Activated CD4-positive, alpha-beta T cell treated with anti-CD3 and anti-CD28 coated beads, Interleukin-2, amount 10 ng/mL, durations not matched to agents 7 days and 5 days (primary cell): ENCODE measurements at regions of chr17 and their contacts with region 1.

Region 1: GRCh38 chr17:81683584-81684237 is at the starts of genes ARL16 and HGS:
- DNase-seq: peak; percentile 98
- H3K4me3 Mint-ChIP-seq: peak within 1 kb of the TSS; percentile 86
- H3K27ac Mint-ChIP-seq: peak within 1 kb of the TSS; percentile 91
- H3K4me1 Mint-ChIP-seq: peaks cover 39% of the 10 kb centered on the region
- H3K27me3 Mint-ChIP-seq: no peaks in the 10 kb centered on the region
- total RNA-seq, gene ARL16: 35.4 to 42.1 TPM
- total RNA-seq, gene HGS: 121 to 128 TPM

Region 2: DNA sequence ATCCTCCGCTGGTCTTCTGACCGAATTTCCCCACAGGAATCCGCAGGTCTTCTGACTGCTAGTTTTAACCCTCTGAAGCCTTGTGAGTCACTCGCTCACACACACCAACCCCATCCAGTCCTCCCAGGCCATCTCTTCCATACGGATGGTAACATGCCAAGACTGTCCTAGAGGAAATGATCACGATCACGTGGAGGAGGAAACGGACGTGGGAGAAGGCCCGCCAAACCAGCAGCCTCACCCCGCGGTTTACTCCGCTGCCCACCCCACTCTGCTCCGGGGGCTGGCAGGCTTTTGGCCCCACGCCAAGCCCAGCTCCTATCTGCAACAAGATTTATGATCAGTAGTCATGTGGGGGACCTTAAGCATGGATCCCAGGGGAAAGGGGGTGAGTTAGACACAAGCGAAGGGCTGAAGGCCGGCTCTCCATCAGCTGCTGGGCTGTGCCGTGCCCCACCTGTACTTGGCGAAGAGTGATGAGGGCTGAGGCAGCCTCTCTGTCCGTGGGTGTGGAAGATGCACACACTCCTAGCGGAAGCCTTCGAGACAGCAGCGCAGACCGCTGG is 130.0 kb before region 1 on chr17:
- CTCF ChIA-PET with region 1: no interaction called
- POLR2A ChIA-PET with region 1: no interaction called
- DNase-seq: no peak
- H3K4me3 Mint-ChIP-seq: peak overlapping the region; percentile 87
- H3K27ac Mint-ChIP-seq: peak overlapping the region; percentile 92
- H3K4me1 Mint-ChIP-seq: peaks cover 35% of the 10 kb centered on the region
- H3K27me3 Mint-ChIP-seq: no peaks in the 10 kb centered on the region

Region 3: DNA sequence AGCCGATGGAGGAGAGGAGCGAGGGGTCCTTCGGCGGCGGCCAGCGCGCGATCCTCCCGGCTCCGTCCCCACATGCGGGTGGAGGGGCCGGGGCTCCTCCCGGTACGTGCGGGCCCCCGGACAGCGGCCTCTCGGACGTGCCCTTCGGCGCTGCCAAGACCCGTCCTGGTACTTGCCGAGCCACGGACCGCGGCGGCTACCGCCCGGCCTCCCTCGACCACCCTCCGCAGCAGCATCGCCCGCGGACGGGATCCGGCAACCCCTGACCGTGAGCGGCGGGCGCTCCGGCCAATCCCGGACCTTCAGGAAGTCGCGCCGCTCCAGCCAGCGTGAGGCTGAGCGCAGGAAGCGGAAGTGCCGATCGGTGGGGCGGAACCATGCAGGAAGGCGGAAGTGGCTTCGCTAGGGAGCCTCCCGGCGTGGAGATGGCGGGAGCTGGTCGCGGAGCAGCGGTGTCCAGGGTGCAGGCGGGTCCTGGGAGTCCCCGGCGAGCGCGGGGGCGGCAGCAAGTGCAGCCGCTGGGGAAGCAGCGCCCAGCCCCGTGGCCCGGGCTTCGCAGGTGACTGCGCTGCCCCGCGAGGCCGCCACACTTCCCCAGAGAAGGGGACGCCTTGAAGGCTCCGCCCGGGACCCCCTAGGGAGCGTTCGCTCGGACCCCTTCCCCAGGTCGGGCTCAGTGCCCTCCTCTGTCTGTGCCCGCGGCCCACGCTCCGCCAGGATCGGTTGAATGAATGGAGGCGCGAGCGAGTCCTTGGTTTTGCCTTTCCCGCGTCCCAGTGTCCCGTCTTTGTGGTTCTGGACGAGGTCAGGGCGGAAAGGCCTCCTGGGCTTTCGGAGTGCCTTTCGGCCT is 17.1 kb before region 1 on chr17 and contains the starts of genes CCDC137 and OXLD1:
- CTCF ChIA-PET with region 1: interaction called, 12 read pairs
- POLR2A ChIA-PET with region 1: interaction called, 3 read pairs
- DNase-seq: peak; percentile 96
- H3K4me3 Mint-ChIP-seq: peak within 1 kb of the TSS; percentile 88
- H3K27ac Mint-ChIP-seq: peak within 1 kb of the TSS; percentile 93
- H3K4me1 Mint-ChIP-seq: peaks cover 54% of the 10 kb centered on the region
- H3K27me3 Mint-ChIP-seq: no peaks in the 10 kb centered on the region
- total RNA-seq, gene CCDC137: 30.2 to 33.8 TPM
- total RNA-seq, gene OXLD1: 43.6 to 49.9 TPM

Region 4: DNA sequence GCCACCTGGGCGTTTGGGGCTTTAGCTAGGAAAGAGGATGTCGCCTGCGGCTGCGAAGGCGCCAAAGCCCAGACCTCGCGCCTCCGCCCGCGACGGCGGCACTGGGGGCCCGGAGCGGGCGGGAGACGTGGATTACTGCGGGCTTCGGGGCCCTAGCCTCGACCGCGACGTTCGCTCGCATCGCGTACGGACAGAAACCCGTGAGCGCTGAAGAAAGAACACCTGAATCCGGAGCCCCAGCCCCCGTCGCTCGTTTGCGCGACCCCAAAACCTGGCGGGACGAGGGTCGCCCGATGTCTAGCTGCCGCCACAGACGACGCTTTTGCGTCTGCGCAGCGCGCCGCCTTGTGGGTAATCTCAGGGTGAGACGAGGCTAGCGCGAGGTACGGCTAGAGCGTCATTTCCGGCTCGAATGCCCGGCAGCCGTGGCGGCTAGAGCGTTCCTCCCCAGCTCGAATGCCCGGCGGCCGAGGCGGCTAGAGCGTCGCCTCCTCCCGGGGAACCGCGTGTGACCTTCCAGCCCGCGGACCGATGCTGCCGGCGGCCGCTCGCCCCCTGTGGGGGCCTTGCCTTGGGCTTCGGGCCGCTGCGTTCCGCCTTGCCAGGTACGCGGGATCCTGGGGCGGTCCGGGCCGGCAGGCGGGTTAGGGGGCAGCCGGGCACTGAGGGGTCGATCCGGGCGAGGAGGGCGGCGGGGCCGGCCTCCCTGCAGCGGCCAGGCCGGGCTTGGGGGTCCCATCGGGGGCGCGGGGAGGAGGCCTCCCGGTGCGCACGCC is 19.4 kb after region 1 on chr17 and contains the start of gene MRPL12:
- CTCF ChIA-PET with region 1: interaction called, 17 read pairs
- POLR2A ChIA-PET with region 1: interaction called, 11 read pairs
- DNase-seq: peak; percentile 92
- H3K4me3 Mint-ChIP-seq: peak within 1 kb of the TSS; percentile 95
- H3K27ac Mint-ChIP-seq: peak within 1 kb of the TSS; percentile 95
- H3K4me1 Mint-ChIP-seq: peaks cover 33% of the 10 kb centered on the region
- H3K27me3 Mint-ChIP-seq: no peaks in the 10 kb centered on the region
- total RNA-seq, gene MRPL12: 52.7 to 62.3 TPM

Region 5: GRCh38 chr17:81719410-81720266 is 35.9 kb after region 1 on chr17:
- CTCF ChIA-PET with region 1: no interaction called
- POLR2A ChIA-PET with region 1: no interaction called
- DNase-seq: no peak
- H3K4me3 Mint-ChIP-seq: no peak overlapping the region
- H3K27ac Mint-ChIP-seq: no peak overlapping the region
- H3K4me1 Mint-ChIP-seq: peaks cover 2% of the 10 kb centered on the region
- H3K27me3 Mint-ChIP-seq: peaks cover 10% of the 10 kb centered on the region